Activated CD4-positive, alpha-beta memory T cell treated with anti-CD3 and anti-CD28 coated beads for 36 hours (primary cell): ENCODE measurements at regions of chr1 and their contacts with region 1.

Region 1: DNA sequence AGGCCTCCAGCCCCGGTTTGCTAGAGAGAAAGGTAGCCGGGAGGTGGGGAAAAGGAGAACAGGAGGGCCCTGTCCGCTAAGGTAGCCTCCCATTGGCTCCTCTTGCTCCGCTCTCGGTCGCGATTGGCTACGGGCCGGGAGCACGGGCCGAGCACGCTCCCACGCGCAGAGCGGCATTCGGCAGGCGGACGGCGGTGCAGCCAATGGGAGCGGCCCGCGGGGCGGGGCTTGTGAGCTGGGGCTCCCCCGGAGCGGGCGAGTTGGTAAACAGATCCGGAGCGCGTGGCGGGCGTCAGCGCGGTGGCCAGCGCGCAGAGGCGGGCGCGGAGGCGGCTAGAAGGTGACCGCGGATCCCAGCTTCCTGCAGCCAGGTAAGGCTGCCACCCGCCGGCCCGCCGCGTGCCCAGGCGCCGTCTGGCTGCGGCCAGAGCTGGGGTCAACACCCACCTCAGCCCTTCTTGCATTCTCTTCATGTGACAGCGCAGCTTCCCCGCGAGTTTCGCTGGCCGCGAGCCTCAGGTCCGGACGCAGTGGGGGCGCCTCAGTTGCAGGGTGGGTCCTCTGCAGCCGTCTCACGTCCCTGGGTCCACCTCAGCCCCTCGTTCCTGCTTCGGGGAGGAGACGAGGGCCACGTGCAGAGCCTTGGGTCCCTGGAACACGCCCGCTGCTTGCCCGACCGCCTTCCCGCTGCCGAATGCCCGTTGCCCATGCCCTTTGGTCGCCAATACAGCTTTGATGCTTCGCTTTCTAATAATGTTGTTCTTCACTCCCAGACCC is at the start of gene COQ8A:
- DNase-seq: peak; percentile 99
- H3K4me3 Mint-ChIP-seq: peak within 1 kb of the TSS; percentile 82
- H3K27ac Mint-ChIP-seq: peak within 1 kb of the TSS; percentile 94
- H3K4me1 Mint-ChIP-seq: peaks cover 41% of the 10 kb centered on the region
- H3K27me3 Mint-ChIP-seq: no peaks in the 10 kb centered on the region
- total RNA-seq, gene COQ8A: 19.8 to 22.2 TPM

Region 2: DNA sequence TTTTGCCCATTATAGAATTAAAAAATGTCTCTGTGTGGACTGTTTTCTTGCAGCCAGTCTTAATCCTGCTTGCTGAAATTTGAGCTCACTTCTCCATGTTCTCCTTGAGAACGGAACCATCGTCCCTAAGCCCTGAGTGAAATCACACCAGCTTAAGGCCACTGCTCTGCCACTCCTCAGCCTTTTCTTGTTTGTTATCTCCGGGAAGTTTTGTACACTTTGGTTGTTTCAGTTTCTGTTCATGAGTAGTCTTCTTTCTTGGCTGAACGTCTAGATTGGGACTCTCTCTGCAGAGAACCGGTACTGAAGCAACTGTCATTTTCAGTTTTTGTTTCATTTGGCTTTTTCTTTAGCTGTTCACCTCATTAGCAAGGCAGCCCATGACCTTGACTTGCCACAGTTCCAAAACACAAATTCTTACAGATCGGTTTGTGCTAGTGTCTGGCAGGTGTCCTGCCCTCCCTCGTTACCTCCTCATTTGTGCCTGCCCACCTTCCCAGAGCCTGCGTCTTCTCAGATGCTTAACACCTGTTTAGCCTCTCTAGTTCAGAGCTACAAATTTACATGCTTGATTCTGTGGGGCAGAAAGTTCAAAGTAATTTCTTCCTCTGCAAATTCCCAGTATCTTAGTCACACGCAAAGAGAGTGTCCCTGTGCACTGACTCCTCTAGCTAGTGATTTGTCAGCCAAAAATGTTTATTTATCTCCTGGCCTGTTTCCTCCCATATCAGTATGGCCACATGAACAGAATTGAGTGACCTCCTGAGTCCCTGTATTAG is 57.4 kb before region 1 on chr1:
- CTCF ChIA-PET with region 1: interaction called, 5 read pairs
- POLR2A ChIA-PET with region 1: interaction called, 20 read pairs
- intact Hi-C with region 1: loop called (anchors 1 kb)
- DNase-seq: peak; percentile 49
- H3K4me3 Mint-ChIP-seq: peak overlapping the region; percentile 56
- H3K27ac Mint-ChIP-seq: peak overlapping the region; percentile 92
- H3K4me1 Mint-ChIP-seq: peaks cover 49% of the 10 kb centered on the region
- H3K27me3 Mint-ChIP-seq: no peaks in the 10 kb centered on the region

Region 3: GRCh38 chr1:226979517-226980121 is 39.4 kb after region 1 on chr1:
- CTCF ChIA-PET with region 1: no interaction called
- POLR2A ChIA-PET with region 1: no interaction called
- intact Hi-C with region 1: no loop called
- DNase-seq: no peak
- H3K4me3 Mint-ChIP-seq: no peak overlapping the region
- H3K27ac Mint-ChIP-seq: no peak overlapping the region
- H3K4me1 Mint-ChIP-seq: no peaks in the 10 kb centered on the region
- H3K27me3 Mint-ChIP-seq: no peaks in the 10 kb centered on the region

Region 4: DNA sequence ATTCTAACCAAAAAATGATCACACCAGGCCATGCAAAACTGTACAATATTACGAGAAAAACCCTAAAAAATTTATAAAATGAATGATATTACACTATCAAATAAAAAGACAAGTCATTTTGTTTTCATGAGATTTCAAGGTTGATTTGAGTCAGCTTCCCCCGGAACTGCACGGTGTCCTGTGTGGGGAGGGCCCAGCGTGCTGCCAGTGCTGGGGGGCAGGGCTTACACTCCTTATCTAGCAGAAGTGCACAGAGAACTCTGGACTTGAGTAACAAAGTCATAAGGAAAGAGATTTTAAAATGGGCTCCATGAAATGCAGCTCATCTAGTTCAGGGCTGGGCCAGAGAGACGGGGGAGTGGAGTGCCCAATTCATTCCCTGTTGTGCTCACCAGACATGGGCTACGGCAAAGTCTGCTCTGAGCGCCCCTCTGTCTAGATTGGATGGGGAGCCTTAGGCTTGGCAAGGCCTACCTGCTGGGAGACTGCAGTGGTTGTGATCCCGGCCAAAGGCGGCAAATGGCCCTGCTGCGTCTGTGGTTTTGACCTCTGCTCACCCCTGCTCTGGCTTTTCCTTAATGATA is 50.0 kb after region 1 on chr1:
- CTCF ChIA-PET with region 1: no interaction called
- POLR2A ChIA-PET with region 1: interaction called, 3 read pairs
- intact Hi-C with region 1: loop called (anchors 1 kb)
- DNase-seq: peak; percentile 88
- H3K4me3 Mint-ChIP-seq: no peak overlapping the region
- H3K27ac Mint-ChIP-seq: peak overlapping the region; percentile 34
- H3K4me1 Mint-ChIP-seq: peaks cover 23% of the 10 kb centered on the region
- H3K27me3 Mint-ChIP-seq: no peaks in the 10 kb centered on the region

Region 5: DNA sequence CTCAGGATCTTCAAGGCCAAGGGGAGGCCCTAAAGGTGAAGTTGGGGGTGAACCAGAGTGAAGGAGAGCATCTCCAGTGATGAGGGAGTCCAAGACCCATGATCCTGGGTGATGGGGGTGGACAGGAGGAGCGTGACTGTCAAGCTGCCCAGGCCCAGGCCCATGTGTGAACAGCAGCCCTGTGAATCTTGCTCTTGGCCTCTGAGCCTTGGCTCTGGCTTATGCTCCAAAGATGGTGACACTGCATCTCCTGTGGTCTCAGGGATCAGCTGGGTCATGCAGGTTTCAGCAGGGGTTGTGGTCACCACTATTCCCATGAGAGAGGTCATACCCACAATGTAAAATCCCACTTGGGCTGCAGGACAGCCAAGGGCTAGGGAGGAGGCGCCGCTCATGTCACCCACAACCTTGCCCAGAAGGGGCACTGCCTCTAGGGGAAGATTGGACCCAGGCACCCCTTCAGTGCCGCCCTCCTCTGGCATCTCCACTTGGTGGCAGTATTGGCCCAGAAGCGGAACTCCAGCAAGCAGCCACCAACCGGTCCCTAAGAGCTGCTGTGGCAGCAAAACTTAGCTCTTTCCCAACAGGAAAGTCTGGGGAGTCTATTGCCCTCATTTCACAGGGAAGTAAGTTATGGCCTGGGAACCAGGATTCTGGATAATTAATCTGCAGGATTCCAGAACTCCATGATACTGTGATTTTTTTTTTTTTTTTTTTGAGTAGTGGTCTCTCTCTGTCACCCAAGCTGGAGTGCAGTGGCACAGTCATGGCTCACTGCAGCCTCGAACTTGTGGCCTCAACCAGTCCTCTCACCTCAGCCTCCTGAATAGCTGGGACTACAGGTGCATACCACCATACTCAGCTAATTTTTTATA is 1059.1 kb after region 1 on chr1:
- CTCF ChIA-PET with region 1: no interaction called
- POLR2A ChIA-PET with region 1: no interaction called
- intact Hi-C with region 1: no loop called
- DNase-seq: peak; percentile 83
- H3K4me3 Mint-ChIP-seq: no peak overlapping the region
- H3K27ac Mint-ChIP-seq: no peak overlapping the region
- H3K4me1 Mint-ChIP-seq: no peaks in the 10 kb centered on the region
- H3K27me3 Mint-ChIP-seq: peaks cover 22% of the 10 kb centered on the region